ENCODE measurements at regions of chr20 and their contacts with region 1.

Region 1: GRCh38 chr20:36439040-36439730 is 102.1 kb upstream of the MYL9 start:
- DNase-seq: peak; percentile 72
- H3K4me3 Mint-ChIP-seq: no peak overlapping the region
- H3K27ac Mint-ChIP-seq: no peak overlapping the region
- H3K4me1 Mint-ChIP-seq: peaks cover 2% of the 10 kb centered on the region
- H3K27me3 Mint-ChIP-seq: peaks cover 3% of the 10 kb centered on the region

Region 2: DNA sequence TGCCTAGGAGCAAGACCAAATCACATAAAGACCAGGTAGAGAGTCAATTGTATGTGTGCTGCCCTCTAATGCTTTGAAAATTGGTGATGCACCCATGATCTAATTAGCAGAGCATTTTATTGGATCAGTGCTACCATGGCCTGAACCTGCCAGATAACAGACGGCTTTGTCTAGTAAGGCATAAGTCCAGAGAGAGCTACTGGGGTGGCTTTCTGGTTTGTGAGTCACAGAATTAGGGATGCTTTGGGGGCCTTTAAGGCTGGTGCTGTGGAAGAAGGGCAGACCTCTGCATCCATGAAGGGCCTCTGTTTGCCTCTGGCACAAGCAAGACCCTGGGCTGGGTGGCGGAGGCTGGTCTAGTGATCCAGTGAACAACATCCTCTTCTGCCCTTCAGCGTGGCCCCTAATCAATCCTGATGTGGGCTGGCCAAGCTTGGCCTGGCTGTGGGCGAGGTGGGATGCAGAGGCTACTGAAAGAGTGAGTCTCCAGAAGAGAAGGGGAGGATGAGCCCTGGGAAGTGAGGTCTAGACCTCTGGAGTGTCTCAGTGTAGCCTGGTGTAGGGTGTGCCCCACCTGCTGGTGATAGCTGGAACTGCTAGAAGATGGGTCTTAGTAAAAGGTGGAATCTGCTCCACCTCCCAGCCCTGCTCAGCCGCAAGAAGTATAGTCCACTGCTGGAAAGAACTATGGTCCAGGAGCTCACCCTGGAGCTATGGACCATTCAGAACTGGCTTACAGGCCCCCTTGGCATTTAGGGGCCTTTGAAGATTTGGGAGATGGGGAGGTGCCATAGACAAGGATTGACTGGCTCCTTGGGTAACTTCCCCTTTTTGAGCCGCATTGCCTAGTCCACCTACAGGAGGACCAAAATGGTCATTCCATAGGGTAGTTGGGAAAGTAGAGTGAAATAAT is 239.6 kb before region 1 on chr20:
- CTCF ChIA-PET with region 1: interaction called, 27 read pairs
- POLR2A ChIA-PET with region 1: no interaction called
- DNase-seq: peak; percentile 74
- H3K4me3 Mint-ChIP-seq: no peak overlapping the region
- H3K27ac Mint-ChIP-seq: no peak overlapping the region
- H3K4me1 Mint-ChIP-seq: peaks cover 4% of the 10 kb centered on the region
- H3K27me3 Mint-ChIP-seq: peaks cover 25% of the 10 kb centered on the region

Region 3: DNA sequence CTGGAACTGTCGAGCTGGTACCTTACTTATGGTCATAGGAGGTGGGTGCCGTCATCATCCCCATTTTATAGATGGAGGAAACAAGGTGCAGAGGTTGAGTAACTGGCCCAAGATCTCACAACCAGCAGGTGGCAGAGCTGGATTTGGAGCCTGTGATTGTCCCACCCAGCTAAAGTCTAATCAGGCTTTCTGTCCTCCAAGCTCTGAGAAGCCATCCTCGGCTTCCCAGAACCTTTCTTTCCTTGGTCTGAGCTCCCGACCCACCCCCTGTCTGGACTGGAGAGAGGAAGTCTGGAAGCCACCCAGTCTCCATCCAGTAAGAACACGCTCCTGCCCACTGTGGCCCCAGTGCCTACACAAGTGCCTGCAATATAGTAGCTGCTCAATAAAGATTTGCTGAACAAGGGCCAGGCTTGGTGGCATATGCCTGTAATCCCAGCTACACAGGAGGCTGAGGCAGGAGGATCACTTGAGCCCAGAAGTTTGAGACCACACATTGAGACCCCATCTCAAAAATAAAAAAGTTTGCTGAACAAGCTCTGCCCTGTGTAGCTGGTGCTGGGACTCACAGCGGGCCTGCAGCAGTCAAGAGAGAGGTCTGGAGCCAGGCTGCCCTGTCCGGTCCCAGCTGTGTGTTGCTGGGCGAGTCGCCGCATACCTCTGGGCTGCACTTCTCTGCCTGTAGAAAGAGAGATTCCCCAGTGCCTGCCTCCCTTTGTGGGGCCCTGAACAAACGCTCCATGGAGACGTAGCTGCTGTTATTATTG is 165.6 kb before region 1 on chr20:
- CTCF ChIA-PET with region 1: interaction called, 15 read pairs
- POLR2A ChIA-PET with region 1: no interaction called
- DNase-seq: peak; percentile 24
- H3K4me3 Mint-ChIP-seq: no peak overlapping the region
- H3K27ac Mint-ChIP-seq: no peak overlapping the region
- H3K4me1 Mint-ChIP-seq: no peaks in the 10 kb centered on the region
- H3K27me3 Mint-ChIP-seq: peaks cover 6% of the 10 kb centered on the region

Region 4: GRCh38 chr20:36481381-36482043 is 42.3 kb after region 1 on chr20:
- CTCF ChIA-PET with region 1: no interaction called
- POLR2A ChIA-PET with region 1: no interaction called
- DNase-seq: no peak
- H3K4me3 Mint-ChIP-seq: no peak overlapping the region
- H3K27ac Mint-ChIP-seq: no peak overlapping the region
- H3K4me1 Mint-ChIP-seq: peaks cover 15% of the 10 kb centered on the region
- H3K27me3 Mint-ChIP-seq: no peaks in the 10 kb centered on the region

Region 5: GRCh38 chr20:36507746-36508145 is 68.6 kb after region 1 on chr20:
- CTCF ChIA-PET with region 1: no interaction called
- POLR2A ChIA-PET with region 1: no interaction called
- DNase-seq: no peak
- H3K4me3 Mint-ChIP-seq: no peak overlapping the region
- H3K27ac Mint-ChIP-seq: no peak overlapping the region
- H3K4me1 Mint-ChIP-seq: peaks cover 5% of the 10 kb centered on the region
- H3K27me3 Mint-ChIP-seq: no peaks in the 10 kb centered on the region

Measured in activated CD4-positive, alpha-beta memory T cell treated with anti-CD3 and anti-CD28 coated beads, Interleukin-2, amount 10 ng/mL, durations not matched to agents 7 days and 5 days (primary cell).